ENCODE measurements at regions of chr19 and their contacts with region 1.

Region 1: GRCh38 chr19:12766051-12766521 is 9.3 kb downstream of the HOOK2 start:
- DNase-seq: peak; percentile 61 to 84 (median 78)
- H3K4me3 ChIP-seq: no peak overlapping the region
- H3K4me3 Mint-ChIP-seq: peak overlapping the region in 2 of 7 donors; percentile 5 to 68
- H3K27ac ChIP-seq: no peak overlapping the region
- H3K27ac Mint-ChIP-seq: peak overlapping the region in 1 of 8 donors; percentile 50
- H3K4me1 ChIP-seq: no peaks in the 10 kb centered on the region
- H3K4me1 Mint-ChIP-seq: peaks cover 4 to 8% (median 7%) of the 10 kb centered on the region in 3 donors
- H3K27me3 ChIP-seq: no peaks in the 10 kb centered on the region
- H3K27me3 Mint-ChIP-seq: no peaks in the 10 kb centered on the region

Region 2: DNA sequence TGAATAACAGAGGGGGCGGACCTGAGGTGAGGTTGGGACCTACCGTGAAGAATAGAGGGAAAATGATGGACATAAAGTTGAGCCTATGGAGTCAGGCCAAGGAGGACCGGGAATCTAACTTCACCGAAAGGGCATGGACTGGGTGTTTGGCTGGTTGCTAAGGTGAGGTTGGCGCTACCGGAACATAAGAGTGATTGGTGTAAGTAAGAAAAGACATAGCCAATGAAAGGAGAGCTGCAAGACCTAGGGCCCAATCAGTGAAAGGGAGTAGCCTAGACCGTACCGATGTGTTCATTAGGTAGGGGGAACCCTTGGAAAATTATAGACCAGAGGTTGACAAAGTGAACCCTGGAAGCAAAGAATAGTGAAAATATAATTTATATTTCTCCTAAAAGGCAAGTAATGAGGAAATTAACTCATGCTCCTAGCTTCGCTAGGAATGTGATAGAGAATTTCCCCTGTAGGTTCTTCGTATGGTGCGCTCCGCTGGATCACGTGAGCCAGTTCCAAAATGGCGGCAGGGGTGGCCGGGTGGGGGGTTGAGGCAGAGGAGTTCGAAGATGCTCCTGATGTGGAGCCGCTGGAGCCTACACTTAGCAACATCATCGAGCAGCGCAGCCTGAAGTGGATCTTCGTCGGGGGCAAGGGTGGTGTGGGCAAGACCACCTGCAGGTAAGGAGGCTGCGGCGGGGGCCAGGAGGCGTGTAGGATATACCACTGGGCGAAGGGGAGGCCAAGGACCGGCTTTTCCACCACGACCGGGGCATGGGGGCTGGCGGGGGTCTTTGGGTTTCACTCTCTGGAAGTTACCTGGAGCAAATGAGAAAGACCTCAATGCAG is 28.9 kb before region 1 on chr19 and contains the start of gene GET3:
- CTCF ChIA-PET with region 1: interaction called, 17 read pairs
- POLR2A ChIA-PET with region 1: no interaction called
- DNase-seq: peak; percentile 69 to 89 (median 85)
- H3K4me3 ChIP-seq: peak within 1 kb of the TSS; percentile 81
- H3K4me3 Mint-ChIP-seq: peak within 1 kb of the TSS; percentile 87 to 100 (median 99)
- H3K27ac ChIP-seq: peak within 1 kb of the TSS; percentile 95
- H3K27ac Mint-ChIP-seq: peak within 1 kb of the TSS; percentile 93 to 99 (median 97)
- H3K4me1 ChIP-seq: peaks cover 37% of the 10 kb centered on the region
- H3K4me1 Mint-ChIP-seq: peaks cover 36 to 48% (median 42%) of the 10 kb centered on the region in 3 donors
- H3K27me3 ChIP-seq: no peaks in the 10 kb centered on the region
- H3K27me3 Mint-ChIP-seq: no peaks in the 10 kb centered on the region
- total RNA-seq, gene GET3: 96.9 to 101 TPM

Region 3: GRCh38 chr19:12777217-12778016 is 11.3 kb after region 1 on chr19:
- CTCF ChIA-PET with region 1: interaction called, 85 read pairs
- POLR2A ChIA-PET with region 1: interaction called, 5 read pairs
- DNase-seq: peak; percentile 74 to 86 (median 78)
- H3K4me3 ChIP-seq: peak overlapping the region; percentile 92
- H3K4me3 Mint-ChIP-seq: peak overlapping the region; percentile 81 to 94 (median 85)
- H3K27ac ChIP-seq: peak overlapping the region; percentile 61
- H3K27ac Mint-ChIP-seq: peak overlapping the region; percentile 78 to 98 (median 94)
- H3K4me1 ChIP-seq: peaks cover 39% of the 10 kb centered on the region
- H3K4me1 Mint-ChIP-seq: peaks cover 27 to 51% (median 30%) of the 10 kb centered on the region in 3 donors
- H3K27me3 ChIP-seq: no peaks in the 10 kb centered on the region
- H3K27me3 Mint-ChIP-seq: peaks cover 0 to 2% of the 10 kb centered on the region in 2 donors

Region 4: GRCh38 chr19:12806239-12807081 is 40.4 kb after region 1 on chr19 and contains the start of gene RNASEH2A:
- CTCF ChIA-PET with region 1: interaction called, 483 read pairs
- POLR2A ChIA-PET with region 1: no interaction called
- DNase-seq: peak; percentile 79 to 88 (median 81)
- H3K4me3 ChIP-seq: peak within 1 kb of the TSS; percentile 59
- H3K4me3 Mint-ChIP-seq: peak within 1 kb of the TSS; percentile 89 to 95 (median 92)
- H3K27ac ChIP-seq: peak within 1 kb of the TSS; percentile 75
- H3K27ac Mint-ChIP-seq: peak within 1 kb of the TSS; percentile 66 to 94 (median 88)
- H3K4me1 ChIP-seq: peaks cover 20% of the 10 kb centered on the region
- H3K4me1 Mint-ChIP-seq: peaks cover 18 to 25% (median 21%) of the 10 kb centered on the region in 3 donors
- H3K27me3 ChIP-seq: no peaks in the 10 kb centered on the region
- H3K27me3 Mint-ChIP-seq: peaks cover 0 to 4% of the 10 kb centered on the region in 2 donors
- total RNA-seq, gene RNASEH2A: 51.5 to 62.4 TPM

Region 5: DNA sequence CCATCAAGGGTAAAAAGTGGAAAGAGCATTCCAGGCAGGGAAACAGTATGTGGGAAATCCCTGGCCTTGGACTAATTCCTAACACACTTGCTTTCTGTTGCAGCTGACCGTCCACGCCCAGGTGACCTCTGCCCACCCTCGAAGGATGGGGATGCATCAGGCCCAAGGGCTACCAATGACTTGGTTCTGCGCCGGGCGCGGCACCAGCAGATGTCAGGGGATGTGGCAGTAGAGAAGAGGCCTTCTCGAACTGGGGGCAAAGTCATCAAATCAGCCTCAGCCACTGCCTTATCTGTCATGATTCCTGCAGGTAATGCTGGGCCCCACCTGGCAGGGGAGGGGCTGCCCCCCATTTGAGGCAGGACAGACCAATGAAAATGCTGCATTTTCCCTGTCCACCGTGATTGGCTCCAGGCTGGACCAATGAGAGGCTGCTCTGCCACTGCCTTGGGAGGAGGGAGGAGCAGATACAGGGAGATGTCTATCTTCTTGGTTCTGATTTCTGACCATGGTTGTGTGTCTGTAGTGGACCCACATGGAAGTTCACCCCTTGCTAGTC is 102.5 kb after region 1 on chr19:
- CTCF ChIA-PET with region 1: interaction called, 12 read pairs
- POLR2A ChIA-PET with region 1: no interaction called
- DNase-seq: no peak
- H3K4me3 ChIP-seq: no peak overlapping the region
- H3K4me3 Mint-ChIP-seq: peak overlapping the region in 3 of 7 donors; percentile 33 to 54 (median 52)
- H3K27ac ChIP-seq: no peak overlapping the region
- H3K27ac Mint-ChIP-seq: no peak overlapping the region
- H3K4me1 ChIP-seq: peaks cover 8% of the 10 kb centered on the region
- H3K4me1 Mint-ChIP-seq: peaks cover 9 to 14% (median 11%) of the 10 kb centered on the region in 3 donors
- H3K27me3 ChIP-seq: no peaks in the 10 kb centered on the region
- H3K27me3 Mint-ChIP-seq: peaks cover 2 to 18% of the 10 kb centered on the region in 2 donors